ENCODE measurements at regions of chr16 and their contacts with region 1.

Region 1: GRCh38 chr16:30922960-30923535 is 324 bp upstream of the FBXL19 start:
- DNase-seq: peak; percentile 95
- H3K4me3 Mint-ChIP-seq: peak overlapping the region; percentile 95
- H3K27ac Mint-ChIP-seq: peak overlapping the region; percentile 100
- H3K4me1 Mint-ChIP-seq: peaks cover 18% of the 10 kb centered on the region
- H3K27me3 Mint-ChIP-seq: no peaks in the 10 kb centered on the region

Region 2: DNA sequence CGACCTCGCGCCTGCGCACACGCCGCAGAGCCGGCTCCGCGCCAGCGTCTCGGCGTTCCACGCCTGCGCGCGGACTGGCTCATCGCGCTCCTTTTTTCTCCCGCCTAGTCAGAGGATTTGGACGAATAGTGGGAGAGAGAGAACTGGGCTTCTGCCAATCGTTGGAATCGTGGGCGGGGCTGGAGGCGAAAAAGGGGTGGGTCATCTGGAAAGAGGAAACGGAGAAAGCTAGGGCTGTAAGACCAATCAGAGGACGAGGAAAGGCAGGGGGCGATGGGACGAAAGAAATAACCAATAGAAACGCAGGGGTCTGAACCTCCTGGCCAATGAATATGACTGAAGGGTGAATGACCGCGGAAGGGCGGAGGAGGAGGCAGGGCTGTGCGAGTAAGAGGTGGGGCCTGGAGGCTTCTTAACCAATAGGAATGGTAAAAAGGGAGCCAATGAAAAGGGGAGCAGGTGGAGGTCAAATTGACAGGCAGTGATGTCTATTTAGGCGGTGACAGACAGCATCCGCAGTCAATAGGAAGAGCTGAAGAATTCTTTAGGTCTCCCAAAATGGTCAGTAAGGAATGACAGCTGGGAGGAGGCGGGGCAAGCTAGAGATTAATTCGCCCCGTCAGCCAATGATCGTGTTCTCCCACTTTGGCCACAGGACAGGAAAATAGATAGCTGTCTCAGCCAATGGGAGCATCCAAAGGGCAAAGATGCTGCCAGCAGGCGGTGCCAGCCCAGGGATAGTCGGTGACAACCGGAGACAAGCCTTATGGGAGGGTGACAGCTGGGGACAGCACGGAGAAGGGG is 552.4 kb before region 1 on chr16 and contains the start of gene TBC1D10B:
- intact Hi-C with region 1: loop called (anchors 1 kb)
- DNase-seq: peak; percentile 99
- H3K4me3 Mint-ChIP-seq: peak within 1 kb of the TSS; percentile 94
- H3K27ac Mint-ChIP-seq: peak within 1 kb of the TSS; percentile 89
- H3K4me1 Mint-ChIP-seq: peaks cover 41% of the 10 kb centered on the region
- H3K27me3 Mint-ChIP-seq: no peaks in the 10 kb centered on the region
- total RNA-seq, gene TBC1D10B: 68.9 and 73.6 TPM in 2 replicates

Region 3: GRCh38 chr16:30657866-30658730 is 264.9 kb before region 1 on chr16 and contains the start of gene FBRS:
- intact Hi-C with region 1: loop called (anchors 1 kb)
- DNase-seq: peak; percentile 100
- H3K4me3 Mint-ChIP-seq: peak within 1 kb of the TSS; percentile 94
- H3K27ac Mint-ChIP-seq: peak within 1 kb of the TSS; percentile 99
- H3K4me1 Mint-ChIP-seq: peaks cover 44% of the 10 kb centered on the region
- H3K27me3 Mint-ChIP-seq: no peaks in the 10 kb centered on the region
- total RNA-seq, gene FBRS: 116 and 125 TPM in 2 replicates

Region 4: DNA sequence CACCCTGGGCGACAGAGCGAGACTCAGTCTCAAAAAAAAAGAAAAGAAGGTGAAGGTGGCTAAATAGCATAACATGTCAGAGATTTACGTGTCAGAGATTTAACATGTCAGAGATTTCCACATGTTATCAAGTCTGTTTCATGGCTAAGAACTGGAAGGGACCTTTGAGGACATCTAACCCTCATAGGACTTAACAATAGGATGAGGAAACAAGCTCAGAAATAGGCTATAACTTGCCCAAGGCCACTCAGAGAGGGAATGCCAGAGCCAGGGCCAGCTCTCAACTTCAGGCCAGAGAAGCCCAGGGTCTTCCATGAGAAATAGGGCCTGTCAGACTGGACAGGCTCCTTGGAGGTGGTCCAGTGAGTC is 109.2 kb before region 1 on chr16:
- intact Hi-C with region 1: loop called (anchors 1 kb)
- DNase-seq: no peak
- H3K4me3 Mint-ChIP-seq: peak overlapping the region; percentile 92
- H3K27ac Mint-ChIP-seq: peak overlapping the region; percentile 78
- H3K4me1 Mint-ChIP-seq: peaks cover 15% of the 10 kb centered on the region
- H3K27me3 Mint-ChIP-seq: peaks cover 4% of the 10 kb centered on the region

Region 5: DNA sequence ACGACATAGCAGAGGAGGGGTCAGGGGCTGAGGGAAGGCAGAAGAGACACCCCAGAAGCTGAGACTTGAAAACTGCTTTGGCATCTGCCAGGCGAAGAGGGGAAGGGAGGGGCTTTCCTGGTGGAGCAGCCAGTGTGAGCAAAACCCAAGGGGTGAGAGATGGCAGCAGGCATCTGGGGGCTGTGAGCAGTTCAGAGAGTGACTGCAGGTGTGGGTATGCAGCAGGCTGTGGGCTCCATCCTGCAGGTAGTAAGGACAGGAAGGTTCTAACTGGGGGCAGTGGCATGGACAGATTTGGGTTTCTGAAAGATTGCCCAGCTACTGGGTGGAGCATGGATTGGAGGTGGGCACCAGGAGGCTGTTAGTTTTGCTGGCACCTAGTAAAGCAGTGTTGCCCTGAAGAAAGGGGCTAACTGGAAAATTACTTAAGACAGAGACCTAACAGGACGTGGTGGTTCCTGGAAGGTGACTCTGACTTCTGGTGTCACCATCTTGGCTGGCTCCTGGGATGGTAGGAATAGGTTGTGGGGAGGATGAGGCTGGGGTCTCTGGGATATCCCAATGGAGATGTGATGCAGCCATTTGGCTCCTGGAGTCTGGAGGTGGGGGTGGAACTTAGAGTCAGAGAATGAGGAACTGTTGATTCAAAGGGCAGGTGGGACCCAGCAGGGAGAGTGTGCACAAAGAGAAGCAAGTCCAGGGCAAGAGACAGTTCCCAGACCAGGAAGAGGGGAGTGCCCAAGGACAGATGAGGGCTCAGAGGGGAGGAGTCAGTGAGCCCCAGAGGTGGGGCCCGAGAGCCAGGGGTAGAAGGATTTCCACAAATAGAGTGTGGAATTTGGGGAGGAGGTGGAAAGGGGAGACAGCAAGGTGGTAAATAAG is 40.4 kb before region 1 on chr16:
- intact Hi-C with region 1: no loop called
- DNase-seq: no peak
- H3K4me3 Mint-ChIP-seq: no peak overlapping the region
- H3K27ac Mint-ChIP-seq: peak overlapping the region; percentile 76
- H3K4me1 Mint-ChIP-seq: peaks cover 32% of the 10 kb centered on the region
- H3K27me3 Mint-ChIP-seq: no peaks in the 10 kb centered on the region

Region 6: GRCh38 chr16:30902029-30902972 is 20.7 kb before region 1 on chr16:
- intact Hi-C with region 1: loop called (anchors 1 kb)
- DNase-seq: peak; percentile 54
- H3K4me3 Mint-ChIP-seq: peak overlapping the region; percentile 94
- H3K27ac Mint-ChIP-seq: peak overlapping the region; percentile 96
- H3K4me1 Mint-ChIP-seq: peaks cover 31% of the 10 kb centered on the region
- H3K27me3 Mint-ChIP-seq: no peaks in the 10 kb centered on the region

Region 7: GRCh38 chr16:30934827-30935557 is 11.9 kb after region 1 on chr16:
- intact Hi-C with region 1: no loop called
- DNase-seq: no peak
- H3K4me3 Mint-ChIP-seq: no peak overlapping the region
- H3K27ac Mint-ChIP-seq: peak overlapping the region; percentile 41
- H3K4me1 Mint-ChIP-seq: peaks cover 23% of the 10 kb centered on the region
- H3K27me3 Mint-ChIP-seq: no peaks in the 10 kb centered on the region

Region 8: GRCh38 chr16:31073968-31074813 is 151.1 kb after region 1 on chr16 and contains the starts of genes ZNF646 and ZNF668:
- intact Hi-C with region 1: loop called (anchors 1 kb)
- DNase-seq: peak; percentile 98
- H3K4me3 Mint-ChIP-seq: peak within 1 kb of the TSS; percentile 99
- H3K27ac Mint-ChIP-seq: peak within 1 kb of the TSS; percentile 96
- H3K4me1 Mint-ChIP-seq: peaks cover 35% of the 10 kb centered on the region
- H3K27me3 Mint-ChIP-seq: no peaks in the 10 kb centered on the region
- total RNA-seq, gene ZNF646: 25.3 and 26.1 TPM in 2 replicates
- total RNA-seq, gene ZNF668: 14.9 and 15.1 TPM in 2 replicates

Region 9: GRCh38 chr16:31142109-31143010 is 219.3 kb after region 1 on chr16:
- intact Hi-C with region 1: loop called (anchors 1 kb)
- DNase-seq: peak; percentile 98
- H3K4me3 Mint-ChIP-seq: peak overlapping the region; percentile 78
- H3K27ac Mint-ChIP-seq: peak overlapping the region; percentile 88
- H3K4me1 Mint-ChIP-seq: peaks cover 12% of the 10 kb centered on the region
- H3K27me3 Mint-ChIP-seq: peaks cover 13% of the 10 kb centered on the region

Measured in activated T-helper 1 cell treated with anti-CD3 and anti-CD28 coated beads, Interleukin-12 subunit alpha, Interleukin-12 subunit beta, Interleukin-2, Interleukin-4 antibody, amounts not matched to agents 30 ng/mL and 10 ng/mL and 1 ng/mL, durations not matched to agents 14 hours and 24 hours and 36 hours (primary cell).